A549 (cell line): ENCODE measurements at regions of chr12 and their contacts with region 1.

Region 1: DNA sequence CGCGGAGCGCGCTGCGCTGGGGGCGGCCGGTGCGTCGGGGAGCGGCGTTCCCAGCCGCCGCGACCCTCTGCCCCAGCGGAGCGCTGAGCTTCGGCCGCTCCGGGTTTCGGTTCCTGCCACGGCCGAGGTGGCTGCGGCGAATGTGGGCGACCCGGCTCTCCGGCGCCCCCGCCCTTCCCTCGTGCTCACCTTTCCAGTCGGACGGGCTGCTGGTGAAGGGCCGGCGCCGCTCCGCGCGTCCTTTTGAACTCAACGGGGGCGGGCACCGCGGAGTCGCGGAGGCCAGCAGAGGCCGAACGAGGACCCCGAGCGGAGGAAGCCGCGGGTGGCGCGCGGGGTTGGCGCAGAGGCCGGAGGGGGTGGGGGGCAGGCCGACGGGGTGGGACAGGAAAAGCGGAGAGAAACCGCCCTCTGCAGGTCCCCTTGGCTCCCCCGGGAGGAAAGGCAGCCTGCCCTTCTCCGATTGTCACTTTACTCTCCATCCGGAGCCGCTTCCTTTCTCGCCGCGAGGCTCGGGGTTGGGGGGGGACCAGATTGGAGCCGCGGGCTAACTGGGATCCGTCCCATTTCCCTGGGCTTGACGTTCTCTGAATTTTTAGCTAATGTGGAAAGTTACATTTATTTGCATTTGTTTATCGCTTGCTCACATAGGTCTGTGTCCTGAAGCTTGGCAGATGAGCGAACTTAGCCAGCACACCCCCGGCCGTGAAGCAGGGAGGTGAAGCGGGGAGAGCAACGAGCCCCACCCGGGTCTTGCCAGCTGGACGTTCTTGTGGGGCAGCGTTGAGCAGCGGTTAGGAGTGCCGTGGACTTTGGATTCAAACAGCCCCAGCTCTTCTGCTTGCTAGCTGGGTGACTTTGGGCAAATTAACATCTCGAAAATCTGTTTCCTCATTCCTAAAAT is at the start of gene SMAGP:
- DNase-seq: peak; percentile 61 to 68
- ATAC-seq: peak; percentile 70 to 75
- H3K4me3 ChIP-seq: peak within 1 kb of the TSS; percentile 68
- H3K27ac ChIP-seq: peak within 1 kb of the TSS; percentile 81 to 92
- H3K4me1 ChIP-seq: peaks cover 8% of the 10 kb centered on the region
- CTCF ChIP-seq: no peak; the same call in 2 of the 3 replicates
- EP300 ChIP-seq: no peak
- POLR2A ChIP-seq: peak; percentile 6
- RAD21 ChIP-seq: 0 out of 5 replicates have a peak, but pooled peaks of 1 of the 2 experiments have one; percentile 7
- polyA plus RNA-seq, gene SMAGP: 27.2 and 38.3 TPM in 2 replicates

Region 2: DNA sequence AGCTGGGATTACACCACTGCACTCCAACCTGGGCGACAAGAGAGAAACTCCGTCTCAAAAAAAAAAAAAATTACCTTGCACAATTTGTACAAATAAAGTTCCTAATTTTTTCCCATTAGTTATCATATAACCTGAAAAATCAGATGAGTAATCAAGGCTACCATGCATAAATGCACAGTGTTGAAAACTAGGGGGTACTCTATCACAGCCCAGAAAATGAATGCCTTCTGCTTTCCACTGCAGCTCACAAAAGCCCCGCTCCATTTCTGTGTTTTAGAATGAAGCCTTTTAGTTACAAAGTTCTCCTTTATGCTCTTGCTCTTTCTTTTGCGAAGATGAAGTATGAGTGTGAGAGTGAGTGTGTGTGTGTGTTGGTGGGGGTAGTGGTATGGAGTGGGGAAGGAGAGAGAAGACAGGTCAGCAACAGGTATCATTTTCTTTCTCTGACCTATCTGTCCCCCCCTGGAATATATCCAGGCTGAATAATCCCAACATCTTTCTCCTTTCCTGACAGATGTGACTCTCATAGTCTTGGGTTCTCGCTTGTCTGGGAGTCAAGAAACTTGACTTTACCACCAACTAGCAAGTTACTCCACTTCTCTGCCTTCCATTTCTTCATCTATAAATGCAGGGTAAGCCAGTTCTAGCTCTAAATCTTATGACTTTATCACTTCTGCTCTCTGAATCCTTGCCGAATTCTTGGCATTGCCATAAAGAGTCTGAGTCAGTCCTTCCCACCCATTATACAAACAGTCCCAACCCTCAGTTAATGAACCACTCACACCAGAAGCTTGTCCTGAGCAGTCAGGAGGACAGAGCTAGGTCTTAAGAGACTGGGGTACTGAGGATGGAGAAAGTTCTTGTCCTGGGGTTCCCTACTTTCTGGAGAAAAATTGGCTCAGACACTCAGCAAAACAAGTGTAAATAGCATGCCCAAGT is 37.6 kb after region 1 on chr12:
- CTCF ChIA-PET with region 1: interaction called, 19 read pairs
- POLR2A ChIA-PET with region 1: interaction called, 22 read pairs
- DNase-seq: peak; percentile 89 to 91
- ATAC-seq: peak; percentile 98 to 99
- H3K4me3 ChIP-seq: peak overlapping the region; percentile 5; the same call in 1 of the 3 replicates
- H3K27ac ChIP-seq: peak overlapping the region; percentile 73 to 86
- H3K4me1 ChIP-seq: peaks cover 23% of the 10 kb centered on the region
- CTCF ChIP-seq: no peak
- EP300 ChIP-seq: no peak
- POLR2A ChIP-seq: no peak
- RAD21 ChIP-seq: no peak

Region 3: DNA sequence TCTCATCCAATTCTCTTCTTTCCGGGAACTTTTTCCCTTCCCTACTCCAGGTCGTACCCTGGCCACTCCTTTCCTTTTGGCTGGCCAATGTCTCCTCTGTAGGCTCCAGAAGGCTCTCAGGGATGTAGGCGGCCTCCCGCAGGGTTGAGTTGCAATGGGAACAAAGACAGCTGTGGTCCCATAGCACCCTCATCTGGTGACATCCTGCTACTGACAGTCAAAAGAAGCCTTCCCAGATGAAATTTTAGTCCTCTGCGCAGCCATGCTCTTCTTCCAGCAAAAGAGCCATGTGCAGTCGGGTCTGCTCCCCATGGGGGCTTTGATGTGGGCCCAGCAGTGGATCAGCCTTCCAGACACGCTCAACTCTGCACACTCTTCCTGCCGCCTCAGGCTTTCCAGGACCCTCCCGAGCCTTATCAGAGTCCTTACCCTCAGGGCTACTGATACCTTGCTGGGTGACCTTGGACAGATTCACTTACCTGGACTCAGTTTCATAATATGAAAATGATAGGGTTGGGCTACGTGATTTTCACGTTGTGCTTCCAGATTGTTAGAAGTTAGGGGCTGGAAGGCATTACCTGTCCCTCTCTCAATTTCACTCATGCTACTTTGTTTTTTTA is 81.7 kb after region 1 on chr12:
- CTCF ChIA-PET with region 1: interaction called, 38 read pairs
- POLR2A ChIA-PET with region 1: interaction called, 4 read pairs
- DNase-seq: peak; percentile 46 to 76
- ATAC-seq: peak; percentile 73 to 87
- H3K4me3 ChIP-seq: no peak overlapping the region
- H3K27ac ChIP-seq: 0 out of 6 replicates have a peak overlapping the region, but pooled peaks of 1 of the 2 experiments have one; percentile 29
- H3K4me1 ChIP-seq: no peaks in the 10 kb centered on the region
- CTCF ChIP-seq: peak; percentile 64
- EP300 ChIP-seq: no peak
- POLR2A ChIP-seq: no peak
- RAD21 ChIP-seq: peak; percentile 79 to 90